Activated CD4-positive, alpha-beta memory T cell treated with anti-CD3 and anti-CD28 coated beads for 36 hours (primary cell): ENCODE measurements at regions of chr13 and their contacts with region 1.

Region 1: GRCh38 chr13:79480954-79481684 is at the start of gene NDFIP2:
- DNase-seq: peak; percentile 94
- H3K4me3 Mint-ChIP-seq: peak within 1 kb of the TSS; percentile 90
- H3K27ac Mint-ChIP-seq: peak within 1 kb of the TSS; percentile 98
- H3K4me1 Mint-ChIP-seq: peaks cover 56% of the 10 kb centered on the region
- H3K27me3 Mint-ChIP-seq: no peaks in the 10 kb centered on the region
- total RNA-seq, gene NDFIP2: 175 to 178 TPM

Region 2: GRCh38 chr13:79336966-79337365 is 144.2 kb before region 1 on chr13:
- CTCF ChIA-PET with region 1: no interaction called
- POLR2A ChIA-PET with region 1: no interaction called
- intact Hi-C with region 1: no loop called
- DNase-seq: no peak
- H3K4me3 Mint-ChIP-seq: no peak overlapping the region
- H3K27ac Mint-ChIP-seq: no peak overlapping the region
- H3K4me1 Mint-ChIP-seq: no peaks in the 10 kb centered on the region
- H3K27me3 Mint-ChIP-seq: no peaks in the 10 kb centered on the region

Region 3: DNA sequence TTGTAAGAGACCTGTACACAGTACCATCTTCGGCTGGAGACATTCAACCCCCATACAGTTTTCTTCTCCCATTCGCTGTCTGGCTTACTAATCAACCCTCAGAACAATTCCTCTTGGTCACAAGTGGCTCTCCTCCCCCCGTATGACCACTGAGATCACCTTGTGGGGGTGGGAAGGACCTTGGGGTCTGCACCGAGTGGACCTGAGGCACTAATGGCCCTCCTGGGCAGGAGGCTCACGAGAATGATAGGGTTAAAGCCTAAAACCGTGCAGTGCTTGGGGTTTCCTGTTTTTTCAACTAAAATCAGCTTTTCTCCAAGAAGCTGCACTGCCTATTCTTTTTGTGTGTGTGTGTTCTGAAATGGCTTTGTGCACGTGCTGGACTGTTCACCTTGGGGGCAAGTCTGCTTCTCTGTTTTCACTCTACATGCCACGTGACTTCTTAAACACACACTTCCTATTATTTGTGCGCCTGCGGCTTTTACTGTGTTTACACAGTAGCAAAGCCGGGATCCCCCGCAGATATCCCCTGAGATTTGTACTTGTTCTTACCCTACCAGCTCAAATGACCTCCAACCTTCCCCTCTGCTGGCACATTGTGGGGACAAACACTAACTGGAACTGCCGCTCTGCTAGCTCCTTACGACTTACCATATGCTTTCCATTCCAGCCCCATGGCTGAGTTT is 87.4 kb before region 1 on chr13:
- CTCF ChIA-PET with region 1: interaction called, 5 read pairs
- POLR2A ChIA-PET with region 1: interaction called, 6 read pairs
- intact Hi-C with region 1: loop called (anchors 1 kb)
- DNase-seq: peak; percentile 38
- H3K4me3 Mint-ChIP-seq: peak overlapping the region; percentile 18
- H3K27ac Mint-ChIP-seq: peak overlapping the region; percentile 82
- H3K4me1 Mint-ChIP-seq: peaks cover 63% of the 10 kb centered on the region
- H3K27me3 Mint-ChIP-seq: no peaks in the 10 kb centered on the region

Region 4: DNA sequence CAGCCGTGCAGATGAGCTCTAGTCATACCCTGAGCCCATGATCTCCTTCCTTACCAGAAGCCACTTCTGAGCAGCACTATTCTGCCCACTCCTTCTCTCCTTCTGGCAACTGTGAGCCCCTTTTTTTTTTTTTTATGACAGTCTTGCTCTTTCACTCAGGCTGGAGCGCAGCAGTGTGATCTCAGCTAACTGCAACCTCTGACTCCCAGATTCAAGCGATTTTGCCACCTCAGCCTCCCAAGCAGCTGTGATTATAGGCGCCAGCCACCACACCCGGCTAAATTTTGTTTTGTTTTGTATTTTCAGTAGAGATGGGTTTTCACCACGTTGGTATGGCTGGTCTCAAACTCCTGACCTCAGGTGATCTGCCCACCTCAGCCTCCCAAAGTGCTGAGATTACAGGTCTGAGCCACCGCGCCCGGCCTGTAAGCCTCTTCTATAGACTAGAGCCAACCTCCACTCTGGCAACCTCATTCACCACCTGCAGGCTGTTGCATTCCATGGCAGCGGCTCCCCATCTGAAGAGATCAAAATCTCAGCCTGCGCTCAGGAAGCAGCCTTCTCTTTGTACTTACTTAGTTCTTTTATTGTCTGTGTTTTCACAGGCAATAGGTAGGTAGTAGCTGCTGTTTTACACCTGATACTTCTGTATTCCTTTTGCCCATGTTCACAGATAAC is 35.0 kb before region 1 on chr13:
- CTCF ChIA-PET with region 1: interaction called, 29 read pairs
- POLR2A ChIA-PET with region 1: interaction called, 114 read pairs
- intact Hi-C with region 1: loop called (anchors 1 kb)
- DNase-seq: peak; percentile 39
- H3K4me3 Mint-ChIP-seq: no peak overlapping the region
- H3K27ac Mint-ChIP-seq: peak overlapping the region; percentile 40
- H3K4me1 Mint-ChIP-seq: peaks cover 56% of the 10 kb centered on the region
- H3K27me3 Mint-ChIP-seq: no peaks in the 10 kb centered on the region

Region 5: DNA sequence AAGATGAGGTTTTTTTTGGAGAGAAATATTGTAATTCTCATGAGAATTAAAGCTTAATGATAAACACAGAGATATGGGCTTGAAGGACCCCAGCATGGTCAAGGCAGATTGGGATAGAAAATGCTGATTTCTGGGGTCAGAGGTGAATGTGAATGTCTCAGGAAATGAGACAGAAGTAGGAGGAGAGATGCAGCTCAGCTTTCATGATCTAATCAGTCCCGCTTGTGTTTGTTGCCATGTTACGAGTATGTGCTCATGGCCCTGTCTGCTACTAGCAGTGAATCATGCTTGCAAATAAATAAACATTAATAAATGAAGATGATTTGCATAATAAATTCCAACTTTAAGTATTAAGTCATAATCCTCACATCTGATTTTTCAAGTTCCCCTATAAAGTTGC is 23.2 kb before region 1 on chr13:
- CTCF ChIA-PET with region 1: interaction called, 13 read pairs
- POLR2A ChIA-PET with region 1: interaction called, 114 read pairs
- intact Hi-C with region 1: loop called (anchors 1 kb)
- DNase-seq: peak; percentile 54
- H3K4me3 Mint-ChIP-seq: no peak overlapping the region
- H3K27ac Mint-ChIP-seq: peak overlapping the region; percentile 13
- H3K4me1 Mint-ChIP-seq: peaks cover 52% of the 10 kb centered on the region
- H3K27me3 Mint-ChIP-seq: no peaks in the 10 kb centered on the region

Region 6: DNA sequence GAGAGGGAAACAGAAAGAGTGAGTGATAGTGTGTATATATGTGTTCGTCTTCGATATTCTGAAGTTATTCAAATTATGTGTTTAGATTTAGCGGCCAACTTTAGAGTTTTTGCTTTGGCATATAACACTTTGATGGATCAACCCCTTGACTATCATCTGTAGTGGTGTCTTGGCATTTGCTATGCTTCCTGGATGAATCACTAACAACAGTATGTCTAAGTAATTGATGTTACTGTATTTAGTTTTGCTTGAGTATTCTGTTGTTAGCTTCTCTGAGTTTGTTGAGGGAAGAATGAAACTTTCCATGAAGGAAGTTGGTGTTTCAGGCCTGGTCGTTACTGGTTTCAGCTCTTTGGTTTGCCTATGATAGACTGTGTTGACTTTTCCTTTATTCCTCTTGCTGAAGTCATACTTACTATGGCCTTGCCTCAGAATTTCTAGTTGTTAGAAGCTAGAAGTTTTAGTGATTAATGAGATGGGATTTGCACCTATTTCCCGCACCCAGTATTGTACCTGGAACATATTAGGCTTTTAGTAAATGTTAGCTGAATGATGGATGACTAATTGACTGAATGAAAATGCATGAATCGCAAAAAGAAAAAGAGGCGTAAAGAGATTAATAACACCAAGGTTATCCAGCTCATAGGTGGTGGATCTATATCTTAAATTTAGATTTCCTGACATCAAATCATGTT is 20.6 kb after region 1 on chr13:
- CTCF ChIA-PET with region 1: interaction called, 13 read pairs
- POLR2A ChIA-PET with region 1: interaction called, 49 read pairs
- intact Hi-C with region 1: loop called (anchors 1 kb)
- DNase-seq: no peak
- H3K4me3 Mint-ChIP-seq: no peak overlapping the region
- H3K27ac Mint-ChIP-seq: peak overlapping the region; percentile 74
- H3K4me1 Mint-ChIP-seq: peaks cover 83% of the 10 kb centered on the region
- H3K27me3 Mint-ChIP-seq: no peaks in the 10 kb centered on the region

Region 7: GRCh38 chr13:79541426-79542049 is 60.4 kb after region 1 on chr13:
- CTCF ChIA-PET with region 1: interaction called, 12 read pairs
- POLR2A ChIA-PET with region 1: interaction called, 4 read pairs
- intact Hi-C with region 1: loop called (anchors 2 kb)
- DNase-seq: no peak
- H3K4me3 Mint-ChIP-seq: no peak overlapping the region
- H3K27ac Mint-ChIP-seq: no peak overlapping the region
- H3K4me1 Mint-ChIP-seq: peaks cover 6% of the 10 kb centered on the region
- H3K27me3 Mint-ChIP-seq: no peaks in the 10 kb centered on the region

Region 8: DNA sequence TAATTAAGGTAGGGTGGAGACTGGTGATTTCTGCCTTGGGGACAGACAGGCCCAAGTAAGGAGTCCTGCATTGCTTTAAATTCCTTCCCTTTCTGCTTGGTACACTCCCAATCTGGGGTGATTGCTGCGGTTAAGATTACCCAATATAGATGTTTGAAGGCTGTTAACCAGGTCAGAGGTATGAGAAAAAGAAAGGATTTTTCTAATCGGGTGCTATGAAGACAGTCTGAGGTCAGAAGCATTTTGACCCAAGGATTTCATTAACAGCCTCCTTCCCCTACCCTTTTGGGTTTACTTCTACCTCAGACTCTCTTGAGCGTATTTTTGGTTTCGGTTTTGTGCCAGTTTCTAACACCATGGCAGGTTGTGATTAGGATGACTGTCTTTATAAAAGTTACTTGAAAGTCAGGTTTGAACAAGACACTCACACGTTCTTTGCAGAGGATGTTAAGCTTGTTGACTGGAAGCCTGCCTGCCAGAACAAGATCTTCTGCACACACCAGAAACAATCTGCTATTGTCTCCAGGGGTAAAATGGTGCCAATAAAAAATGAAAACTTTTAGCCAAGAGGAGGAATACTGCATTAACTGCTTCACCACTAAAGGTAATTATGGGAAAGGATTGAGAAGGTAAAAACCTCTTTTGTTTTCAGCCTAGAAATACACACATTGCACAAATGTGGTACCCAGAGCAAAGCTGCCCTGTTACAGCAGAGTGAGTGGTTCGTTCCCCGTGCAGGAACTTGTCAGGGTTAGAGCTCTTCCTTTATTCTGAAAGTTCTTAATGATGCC is 108.7 kb after region 1 on chr13:
- CTCF ChIA-PET with region 1: no interaction called
- POLR2A ChIA-PET with region 1: no interaction called
- intact Hi-C with region 1: no loop called
- DNase-seq: no peak
- H3K4me3 Mint-ChIP-seq: no peak overlapping the region
- H3K27ac Mint-ChIP-seq: no peak overlapping the region
- H3K4me1 Mint-ChIP-seq: no peaks in the 10 kb centered on the region
- H3K27me3 Mint-ChIP-seq: no peaks in the 10 kb centered on the region